PC-9 (cell line): ENCODE measurements at regions of chr19 and their contacts with region 1.

Region 1: DNA sequence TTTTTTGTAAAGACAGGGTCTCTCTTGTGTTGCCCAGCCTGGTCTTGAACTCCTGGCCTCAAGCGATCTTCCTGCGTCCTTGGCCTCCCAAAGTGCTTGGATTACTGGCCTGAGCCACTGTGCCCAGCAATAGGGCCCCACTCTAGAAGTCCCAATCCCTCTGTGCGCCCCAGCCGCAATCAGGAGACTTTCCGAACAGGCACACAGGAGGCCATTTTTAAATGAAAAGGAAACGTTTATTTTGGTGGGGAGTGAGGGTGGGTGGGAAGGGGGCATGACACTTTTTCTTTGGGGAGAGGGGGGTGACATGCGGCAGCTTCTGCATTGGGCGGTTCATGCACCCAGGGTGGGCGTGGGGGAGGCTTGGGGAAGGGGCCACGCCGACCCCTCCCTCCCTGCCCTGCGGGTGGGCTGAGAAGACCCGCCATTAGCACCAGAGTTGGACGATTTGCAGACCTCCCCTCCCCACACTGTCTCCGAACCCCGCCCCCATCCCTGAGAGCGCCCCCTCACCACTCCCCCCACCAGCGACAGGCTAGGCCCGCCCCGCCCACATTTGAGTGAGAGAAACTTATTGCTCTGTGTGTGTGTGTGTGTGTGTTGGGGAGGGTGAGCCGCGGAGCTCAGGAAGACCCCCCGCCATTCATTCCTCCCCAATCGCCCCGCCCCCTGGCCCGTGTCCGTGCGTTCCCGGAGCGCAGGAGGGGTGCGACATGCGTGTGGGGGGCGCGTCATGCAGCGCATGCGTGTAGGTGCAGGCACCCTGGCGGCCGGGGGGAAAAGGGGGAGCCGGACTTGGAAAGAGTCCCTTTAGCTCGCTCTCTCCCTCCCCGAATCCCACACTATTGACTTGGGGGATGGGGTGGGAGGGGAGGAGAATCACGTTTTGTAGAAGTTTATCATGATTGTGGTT is 17.2 kb downstream of the KCNC3 start:
- DNase-seq: no peak
- H3K4me3 ChIP-seq: no peak overlapping the region
- H3K27ac ChIP-seq: no peak overlapping the region
- H3K4me1 ChIP-seq: 0 out of 2 replicates have a peak, but pooled peaks cover 3% of the 10 kb centered on the region
- H3K27me3 ChIP-seq: no peaks in the 10 kb centered on the region
- CTCF ChIP-seq: no peak

Region 2: GRCh38 chr19:50147462-50148423 is 164.2 kb before region 1 on chr19:
- CTCF ChIA-PET with region 1: no interaction called
- POLR2A ChIA-PET with region 1: no interaction called
- intact Hi-C with region 1: no loop called
- DNase-seq: peak; percentile 86
- H3K4me3 ChIP-seq: peak overlapping the region; percentile 66
- H3K27ac ChIP-seq: 0 out of 2 replicates have a peak overlapping the region, but pooled peaks have one; percentile 21
- H3K4me1 ChIP-seq: no peaks in the 10 kb centered on the region
- H3K27me3 ChIP-seq: peaks cover 20% of the 10 kb centered on the region; the same call in 1 of the 2 replicates
- CTCF ChIP-seq: peak; percentile 89

Region 3: DNA sequence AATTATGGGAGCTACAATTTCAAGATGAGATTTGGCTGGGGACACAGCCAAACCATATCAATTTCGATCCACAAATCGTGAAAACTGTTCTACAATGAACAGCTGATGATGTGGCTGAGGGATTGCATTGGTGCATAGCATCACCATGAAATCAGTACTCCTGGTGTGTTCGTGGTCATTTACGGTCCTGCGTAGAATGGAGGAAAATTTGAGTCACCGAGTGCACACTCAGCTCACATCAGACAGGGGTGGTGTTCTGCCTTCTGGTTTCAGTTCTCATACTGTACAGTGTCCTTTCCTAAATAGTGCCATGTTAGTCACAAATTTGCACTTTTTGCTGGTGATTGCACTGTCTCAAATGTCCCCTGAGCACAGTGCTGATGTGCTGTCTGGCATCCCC is 69.4 kb before region 1 on chr19:
- CTCF ChIA-PET with region 1: interaction called, 13 read pairs
- POLR2A ChIA-PET with region 1: no interaction called
- intact Hi-C with region 1: no loop called
- DNase-seq: no peak
- H3K4me3 ChIP-seq: no peak overlapping the region
- H3K27ac ChIP-seq: no peak overlapping the region
- H3K4me1 ChIP-seq: no peaks in the 10 kb centered on the region
- H3K27me3 ChIP-seq: no peaks in the 10 kb centered on the region
- CTCF ChIP-seq: no peak